IMR-90 (cell line): ENCODE measurements at regions of chr5 and their contacts with region 1.

Region 1: DNA sequence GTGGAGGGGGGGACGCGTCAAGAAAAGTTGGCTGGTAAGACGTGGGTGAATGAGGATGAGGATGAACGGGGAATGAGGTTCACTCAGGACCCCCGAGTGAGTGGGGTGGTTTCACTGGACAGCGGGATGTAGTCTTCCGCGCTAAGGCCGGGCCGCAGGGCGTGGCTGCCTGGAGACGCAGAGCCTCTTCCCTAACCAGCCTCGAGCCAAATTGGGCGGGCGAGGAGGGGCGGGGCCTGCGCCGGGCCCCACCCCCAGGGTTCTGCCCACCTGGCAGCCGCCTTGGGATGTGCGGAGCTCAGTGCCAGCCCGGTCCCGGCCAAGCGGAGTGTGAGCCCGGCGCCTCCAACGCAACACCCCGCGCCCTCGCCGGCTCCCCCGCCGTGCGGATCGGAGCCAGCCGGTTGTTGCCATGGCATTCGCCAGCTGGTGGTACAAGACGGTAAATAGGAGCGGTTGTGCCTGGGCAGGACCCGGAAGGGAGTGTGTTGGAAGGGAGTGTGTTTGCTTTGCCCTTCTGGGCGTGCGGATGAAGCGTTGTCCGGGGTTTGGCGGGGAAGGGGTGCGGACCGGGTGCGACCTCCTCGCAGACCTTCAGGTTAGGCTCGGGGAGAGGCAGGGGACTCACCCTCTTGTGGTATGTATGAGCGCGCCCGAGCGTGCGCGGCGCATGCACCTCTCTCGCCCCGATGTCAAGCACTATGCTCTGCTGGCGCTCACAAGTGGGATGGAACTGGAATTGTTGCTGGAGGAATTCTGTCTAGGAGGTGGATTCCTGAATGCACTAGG is 743 bp downstream of the CAST start:
- DNase-seq: peak; percentile 79
- ATAC-seq: peak; percentile 86
- H3K4me3 ChIP-seq: peak overlapping the region; percentile 92
- H3K27ac ChIP-seq: peak overlapping the region; percentile 90
- H3K4me1 ChIP-seq: peaks cover 1% of the 10 kb centered on the region; the same call in 1 of the 2 replicates
- H3K27me3 ChIP-seq: no peaks in the 10 kb centered on the region
- CTCF ChIP-seq: no peak
- POLR2A ChIP-seq: peak; percentile 58; the same call in 1 of the 2 replicates
- RAD21 ChIP-seq: no peak

Region 2: DNA sequence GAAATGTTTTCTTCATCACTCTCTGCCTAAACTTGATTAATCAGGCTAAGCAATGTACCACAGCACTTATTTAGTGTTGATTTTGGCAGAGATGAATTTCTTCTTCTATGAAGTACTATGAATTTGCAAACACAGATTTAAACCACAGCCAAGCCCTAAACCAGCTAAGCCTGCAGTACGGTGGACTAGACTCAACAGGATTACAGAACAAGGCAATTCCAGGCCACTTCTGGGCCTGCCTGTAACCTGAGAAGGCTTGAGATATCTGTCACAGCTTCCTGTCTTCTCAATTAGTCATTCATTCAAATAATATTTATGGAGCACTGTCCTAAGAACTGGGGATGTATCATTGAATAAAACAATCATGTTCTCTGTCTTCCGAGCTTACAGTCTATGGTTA is 33.1 kb before region 1 on chr5:
- CTCF ChIA-PET with region 1: no interaction called
- POLR2A ChIA-PET with region 1: no interaction called
- dilution Hi-C with region 1: no loop called
- in situ Hi-C with region 1: no loop called
- intact Hi-C with region 1: loop called (anchors 5 kb)
- DNase-seq: peak; percentile 89
- ATAC-seq: peak; percentile 81
- H3K4me3 ChIP-seq: no peak overlapping the region
- H3K27ac ChIP-seq: no peak overlapping the region
- H3K4me1 ChIP-seq: peaks cover 25% of the 10 kb centered on the region
- H3K27me3 ChIP-seq: no peaks in the 10 kb centered on the region
- CTCF ChIP-seq: no peak
- POLR2A ChIP-seq: no peak
- RAD21 ChIP-seq: no peak